Activated T-helper 1 cell treated with anti-CD3 and anti-CD28 coated beads, Interleukin-12 subunit alpha, Interleukin-12 subunit beta, Interleukin-2, Interleukin-4 antibody, amounts not matched to agents 30 ng/mL and 10 ng/mL and 1 ng/mL, durations not matched to agents 14 hours and 24 hours and 36 hours (primary cell): ENCODE measurements at regions of chr12 and their contacts with region 1.

Region 1: DNA sequence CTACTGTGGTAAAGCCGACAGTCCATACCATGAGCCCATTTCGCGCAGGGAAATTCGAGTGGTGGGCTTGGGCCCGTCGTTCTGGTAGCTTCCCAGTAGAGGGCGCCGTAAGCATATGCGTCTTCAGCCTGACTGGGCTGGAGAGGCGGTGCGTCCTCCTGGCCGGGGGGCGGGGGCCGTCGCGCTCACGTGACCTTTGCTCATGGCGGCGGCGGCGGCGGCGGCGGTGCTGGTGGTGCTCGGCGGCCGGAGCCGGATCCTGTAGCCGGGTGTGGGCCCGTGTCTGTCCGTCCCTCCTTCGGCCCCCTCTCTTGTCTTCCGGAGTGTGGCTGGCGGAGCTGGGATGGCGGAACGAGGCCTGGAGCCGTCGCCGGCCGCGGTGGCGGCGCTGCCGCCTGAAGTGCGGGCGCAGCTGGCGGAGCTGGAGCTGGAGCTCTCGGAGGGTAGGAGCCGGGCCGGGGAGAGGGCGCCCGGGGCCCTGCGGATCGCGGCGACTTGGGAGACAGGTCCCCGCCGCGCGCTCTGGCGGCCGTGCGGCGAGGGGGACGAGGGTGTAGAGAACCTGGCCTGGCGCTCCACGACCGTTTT is at the start of gene DIP2B:
- DNase-seq: peak; percentile 93
- H3K4me3 Mint-ChIP-seq: peak within 1 kb of the TSS; percentile 95
- H3K27ac Mint-ChIP-seq: peak within 1 kb of the TSS; percentile 95
- H3K4me1 Mint-ChIP-seq: peaks cover 51% of the 10 kb centered on the region
- H3K27me3 Mint-ChIP-seq: peaks cover 2% of the 10 kb centered on the region
- total RNA-seq, gene DIP2B: 26.7 and 27.6 TPM in 2 replicates

Region 2: GRCh38 chr12:50387487-50388478 is 117.1 kb before region 1 on chr12:
- intact Hi-C with region 1: no loop called
- DNase-seq: no peak
- H3K4me3 Mint-ChIP-seq: no peak overlapping the region
- H3K27ac Mint-ChIP-seq: no peak overlapping the region
- H3K4me1 Mint-ChIP-seq: no peaks in the 10 kb centered on the region
- H3K27me3 Mint-ChIP-seq: peaks cover 5% of the 10 kb centered on the region

Region 3: DNA sequence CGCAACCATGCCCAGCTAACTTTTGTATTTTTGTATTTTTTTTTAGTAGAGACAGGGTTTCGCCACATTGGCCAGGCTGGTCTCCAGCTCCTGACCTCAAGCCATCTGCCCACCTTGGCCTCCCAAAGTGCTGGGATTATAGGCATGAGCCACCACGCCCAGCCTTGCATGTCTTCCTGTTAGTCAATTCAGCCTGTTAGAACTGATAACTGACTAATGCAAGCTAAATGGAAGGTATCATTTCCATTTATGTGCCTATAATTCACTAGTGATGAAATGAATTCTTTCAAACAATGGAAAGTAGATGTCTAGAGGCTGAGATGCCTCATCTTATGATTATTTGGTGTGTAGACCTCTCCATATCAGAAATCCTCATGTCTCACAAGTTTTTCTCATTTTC is 37.5 kb before region 1 on chr12:
- intact Hi-C with region 1: no loop called
- DNase-seq: no peak
- H3K4me3 Mint-ChIP-seq: no peak overlapping the region
- H3K27ac Mint-ChIP-seq: peak overlapping the region; percentile 28
- H3K4me1 Mint-ChIP-seq: no peaks in the 10 kb centered on the region
- H3K27me3 Mint-ChIP-seq: no peaks in the 10 kb centered on the region

Region 4: GRCh38 chr12:50517456-50518048 is 12.7 kb after region 1 on chr12:
- intact Hi-C with region 1: loop called (anchors 1 kb)
- DNase-seq: no peak
- H3K4me3 Mint-ChIP-seq: no peak overlapping the region
- H3K27ac Mint-ChIP-seq: no peak overlapping the region
- H3K4me1 Mint-ChIP-seq: peaks cover 31% of the 10 kb centered on the region
- H3K27me3 Mint-ChIP-seq: no peaks in the 10 kb centered on the region

Region 5: GRCh38 chr12:50555471-50555885 is 50.6 kb after region 1 on chr12:
- intact Hi-C with region 1: loop called (anchors 1 kb)
- DNase-seq: no peak
- H3K4me3 Mint-ChIP-seq: peak overlapping the region; percentile 48
- H3K27ac Mint-ChIP-seq: peak overlapping the region; percentile 91
- H3K4me1 Mint-ChIP-seq: peaks cover 33% of the 10 kb centered on the region
- H3K27me3 Mint-ChIP-seq: no peaks in the 10 kb centered on the region

Region 6: GRCh38 chr12:50637870-50638481 is 133.1 kb after region 1 on chr12:
- intact Hi-C with region 1: loop called (anchors 1 kb)
- DNase-seq: no peak
- H3K4me3 Mint-ChIP-seq: no peak overlapping the region
- H3K27ac Mint-ChIP-seq: peak overlapping the region; percentile 31
- H3K4me1 Mint-ChIP-seq: peaks cover 44% of the 10 kb centered on the region
- H3K27me3 Mint-ChIP-seq: no peaks in the 10 kb centered on the region

Region 7: DNA sequence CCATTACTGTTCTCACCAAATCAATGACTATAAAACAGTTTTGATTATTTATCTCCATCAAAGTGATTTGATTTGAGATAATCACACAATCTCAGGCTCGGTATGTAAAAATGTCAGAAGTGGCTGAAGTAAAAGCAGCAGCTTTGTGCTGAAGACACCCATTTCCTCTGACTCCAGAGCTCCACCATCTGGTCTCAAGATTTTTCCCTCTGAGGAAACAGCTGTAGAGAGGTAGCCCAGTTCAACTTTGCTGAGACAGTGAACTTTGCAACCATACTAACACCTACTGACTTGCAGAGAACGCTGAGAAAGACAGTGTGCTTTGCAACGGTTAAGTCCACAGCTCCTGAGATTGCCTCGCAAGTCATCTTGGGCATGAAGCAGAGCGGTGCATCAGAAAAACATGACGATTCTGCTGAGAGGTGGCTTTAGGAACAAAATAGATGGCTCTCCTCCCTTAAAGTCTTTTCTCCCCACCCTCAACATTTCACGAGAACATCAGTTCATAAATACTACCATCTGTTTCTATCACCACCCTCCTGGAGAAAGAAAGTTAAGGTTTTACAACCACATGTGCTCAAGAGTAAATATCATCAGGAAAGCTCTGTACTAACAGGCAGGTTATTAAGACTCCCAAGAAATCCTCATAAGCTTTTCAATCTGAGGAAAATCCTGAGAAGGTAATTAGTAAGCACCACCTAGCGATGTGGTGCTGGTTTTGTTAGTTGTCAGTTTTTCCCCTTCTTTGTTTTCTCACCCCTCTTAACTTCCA is 482.3 kb after region 1 on chr12:
- intact Hi-C with region 1: loop called (anchors 10 kb)
- DNase-seq: peak; percentile 29
- H3K4me3 Mint-ChIP-seq: no peak overlapping the region
- H3K27ac Mint-ChIP-seq: peak overlapping the region; percentile 80
- H3K4me1 Mint-ChIP-seq: peaks cover 48% of the 10 kb centered on the region
- H3K27me3 Mint-ChIP-seq: no peaks in the 10 kb centered on the region